ENCODE measurements at regions of chr22 and their contacts with region 1.

Region 1: DNA sequence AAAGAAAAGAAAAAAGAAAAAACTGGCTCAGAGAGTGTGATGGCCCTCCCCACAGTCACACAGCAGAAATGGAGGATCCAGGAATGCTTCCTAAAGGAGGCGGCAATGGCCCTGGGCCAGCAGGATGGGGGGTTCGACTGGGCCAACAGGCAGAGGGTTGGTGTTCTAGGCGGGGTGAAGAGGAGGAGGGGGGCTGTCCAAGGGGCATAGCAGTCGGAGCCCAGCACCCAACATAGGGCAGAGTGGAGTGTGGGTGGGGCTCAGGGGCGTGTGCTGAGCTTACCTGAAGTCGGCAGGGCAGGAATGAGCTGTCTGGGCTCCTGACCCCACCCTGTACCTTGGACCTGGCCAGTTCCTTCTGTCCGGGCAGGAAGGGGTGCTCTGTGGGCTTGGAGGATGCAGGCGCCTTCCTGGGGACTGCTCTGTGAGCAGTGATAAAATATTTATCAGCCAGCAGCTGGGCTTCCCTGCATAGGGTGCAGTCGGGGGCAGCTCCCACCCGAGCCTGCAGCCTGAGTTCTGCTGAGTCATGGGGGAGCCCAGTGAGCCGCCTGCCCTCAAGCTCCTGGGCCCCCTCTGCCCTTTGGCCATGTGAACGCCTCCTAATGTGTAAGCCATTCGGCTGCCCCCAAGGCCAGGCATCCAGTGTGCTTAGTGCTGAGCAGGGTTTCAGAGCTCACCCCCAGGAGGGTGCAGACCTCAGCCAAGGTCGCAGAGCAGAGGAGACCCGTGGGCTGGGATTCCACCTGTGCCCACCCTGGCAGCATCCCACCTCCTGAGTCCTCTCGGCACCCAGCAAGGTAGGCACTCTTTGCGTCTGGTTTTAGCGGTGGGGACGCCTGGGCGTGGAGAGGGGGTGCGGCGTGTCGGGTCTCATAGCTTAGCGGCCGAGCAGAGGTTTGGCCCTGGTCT is 25.3 kb upstream of the PRR5 start:
- DNase-seq: no peak
- ATAC-seq: peak; percentile 77
- H3K4me3 ChIP-seq: peak overlapping the region in 1 of 2 experiments; percentile 45; a peak in 2 of 4 replicates
- H3K27ac ChIP-seq: no peak overlapping the region; the same call in 1 of the 2 replicates
- H3K4me1 ChIP-seq: peaks cover 8 to 15% of the 10 kb centered on the region in 2 experiments
- H3K27me3 ChIP-seq: no peaks in the 10 kb centered on the region
- CTCF ChIP-seq: no peak
- POLR2A ChIP-seq: no peak
- RAD21 ChIP-seq: no peak

Region 2: GRCh38 chr22:44620129-44620840 is 56.4 kb before region 1 on chr22:
- CTCF ChIA-PET with region 1: no interaction called
- POLR2A ChIA-PET with region 1: no interaction called
- RAD21 ChIA-PET with region 1: no interaction called
- intact Hi-C with region 1: no loop called
- DNase-seq: no peak
- ATAC-seq: no peak
- H3K4me3 ChIP-seq: no peak overlapping the region
- H3K27ac ChIP-seq: no peak overlapping the region
- H3K4me1 ChIP-seq: no peaks in the 10 kb centered on the region
- H3K27me3 ChIP-seq: no peaks in the 10 kb centered on the region
- CTCF ChIP-seq: no peak
- POLR2A ChIP-seq: no peak
- RAD21 ChIP-seq: no peak

Region 3: GRCh38 chr22:44658311-44658953 is 18.3 kb before region 1 on chr22:
- CTCF ChIA-PET with region 1: no interaction called
- POLR2A ChIA-PET with region 1: no interaction called
- RAD21 ChIA-PET with region 1: no interaction called
- intact Hi-C with region 1: loop called (anchors 2 kb)
- DNase-seq: no peak
- ATAC-seq: no peak
- H3K4me3 ChIP-seq: no peak overlapping the region
- H3K27ac ChIP-seq: no peak overlapping the region
- H3K4me1 ChIP-seq: no peaks in the 10 kb centered on the region
- H3K27me3 ChIP-seq: no peaks in the 10 kb centered on the region
- CTCF ChIP-seq: no peak
- POLR2A ChIP-seq: no peak
- RAD21 ChIP-seq: no peak

Region 4: DNA sequence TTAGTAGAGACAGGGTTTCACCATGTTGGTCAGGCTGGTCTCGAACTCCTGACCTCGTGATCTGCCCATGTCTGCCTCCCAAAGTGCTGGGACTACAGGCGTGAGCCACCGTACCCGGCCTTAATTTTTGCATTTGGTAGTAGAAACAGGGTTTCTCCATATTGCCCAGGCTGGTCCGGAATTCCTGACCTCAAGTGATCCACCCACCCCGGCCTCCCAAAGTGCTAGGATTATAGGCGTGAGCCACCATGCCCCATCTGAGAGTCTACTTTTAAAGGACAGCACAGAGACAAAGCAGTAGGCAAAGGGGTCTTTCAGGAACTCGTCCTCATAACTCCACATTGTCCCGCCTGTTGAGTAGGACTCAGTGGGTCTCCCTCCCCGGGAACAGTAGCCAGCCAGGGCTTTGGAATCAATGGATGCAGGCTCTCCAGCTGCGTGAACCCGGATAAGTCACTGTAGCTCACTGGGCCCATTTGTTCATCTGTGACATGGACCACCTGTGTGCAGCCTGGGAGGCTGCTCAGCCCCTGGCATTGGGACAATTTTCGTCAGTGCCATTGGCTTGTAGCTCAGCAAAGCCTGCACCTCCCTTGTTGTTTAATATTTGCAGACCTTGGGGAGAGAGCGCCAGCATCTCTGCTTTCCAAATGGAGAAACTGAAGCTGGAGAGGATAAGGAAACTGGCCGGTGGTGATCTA is 161.8 kb after region 1 on chr22:
- CTCF ChIA-PET with region 1: no interaction called
- POLR2A ChIA-PET with region 1: no interaction called
- RAD21 ChIA-PET with region 1: no interaction called
- intact Hi-C with region 1: no loop called
- DNase-seq: no peak
- ATAC-seq: no peak
- H3K4me3 ChIP-seq: no peak overlapping the region
- H3K27ac ChIP-seq: no peak overlapping the region
- H3K4me1 ChIP-seq: no peaks in the 10 kb centered on the region
- H3K27me3 ChIP-seq: no peaks in the 10 kb centered on the region
- CTCF ChIP-seq: no peak
- POLR2A ChIP-seq: no peak
- RAD21 ChIP-seq: no peak

Measured in HCT116 (cell line).